Activated CD4-positive, alpha-beta T cell treated with anti-CD3 and anti-CD28 coated beads, Interleukin-2, amount 10 ng/mL, durations not matched to agents 24 days and 14 days (primary cell): ENCODE measurements at regions of chr3 and their contacts with region 1.

Region 1: DNA sequence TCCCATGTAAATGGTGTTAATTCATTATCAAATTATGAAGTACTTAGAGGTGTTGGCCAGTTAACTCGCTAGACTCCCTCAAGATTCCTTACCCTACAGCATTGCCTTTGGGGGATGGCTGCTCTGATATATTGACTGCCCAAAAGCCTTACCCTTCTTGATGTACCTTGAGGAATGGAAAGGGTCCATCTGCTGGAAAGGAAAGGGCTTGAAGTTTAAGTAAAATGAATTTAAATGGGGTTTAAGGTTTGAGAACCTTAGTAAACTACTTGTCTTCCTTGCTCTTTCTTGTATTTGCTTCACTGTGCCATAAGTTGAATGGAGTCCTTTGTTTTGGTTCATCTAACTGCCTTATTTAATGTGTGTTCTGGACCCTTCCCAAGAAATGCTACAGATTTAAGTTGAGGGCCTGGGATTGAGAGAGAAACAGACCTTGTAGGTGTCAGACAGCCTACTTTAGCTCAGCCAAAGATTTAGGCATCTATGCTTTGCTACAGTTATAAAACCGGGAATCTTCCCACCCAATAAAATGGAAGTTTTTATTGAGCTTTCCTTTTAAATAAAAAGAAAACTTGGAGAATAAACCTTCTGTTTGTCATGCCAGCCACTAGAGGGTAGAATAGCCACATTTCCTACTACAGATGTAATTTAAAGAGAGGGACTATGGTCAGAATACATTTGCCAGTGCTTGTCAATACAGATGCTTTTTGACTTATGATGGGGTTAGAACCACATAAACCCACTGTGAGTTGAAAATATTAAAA is 25.3 kb downstream of the CMSS1 start:
- DNase-seq: no peak
- H3K4me3 Mint-ChIP-seq: no peak overlapping the region
- H3K27ac Mint-ChIP-seq: peak overlapping the region; percentile 49
- H3K4me1 Mint-ChIP-seq: peaks cover 18% of the 10 kb centered on the region
- H3K27me3 Mint-ChIP-seq: no peaks in the 10 kb centered on the region

Region 2: DNA sequence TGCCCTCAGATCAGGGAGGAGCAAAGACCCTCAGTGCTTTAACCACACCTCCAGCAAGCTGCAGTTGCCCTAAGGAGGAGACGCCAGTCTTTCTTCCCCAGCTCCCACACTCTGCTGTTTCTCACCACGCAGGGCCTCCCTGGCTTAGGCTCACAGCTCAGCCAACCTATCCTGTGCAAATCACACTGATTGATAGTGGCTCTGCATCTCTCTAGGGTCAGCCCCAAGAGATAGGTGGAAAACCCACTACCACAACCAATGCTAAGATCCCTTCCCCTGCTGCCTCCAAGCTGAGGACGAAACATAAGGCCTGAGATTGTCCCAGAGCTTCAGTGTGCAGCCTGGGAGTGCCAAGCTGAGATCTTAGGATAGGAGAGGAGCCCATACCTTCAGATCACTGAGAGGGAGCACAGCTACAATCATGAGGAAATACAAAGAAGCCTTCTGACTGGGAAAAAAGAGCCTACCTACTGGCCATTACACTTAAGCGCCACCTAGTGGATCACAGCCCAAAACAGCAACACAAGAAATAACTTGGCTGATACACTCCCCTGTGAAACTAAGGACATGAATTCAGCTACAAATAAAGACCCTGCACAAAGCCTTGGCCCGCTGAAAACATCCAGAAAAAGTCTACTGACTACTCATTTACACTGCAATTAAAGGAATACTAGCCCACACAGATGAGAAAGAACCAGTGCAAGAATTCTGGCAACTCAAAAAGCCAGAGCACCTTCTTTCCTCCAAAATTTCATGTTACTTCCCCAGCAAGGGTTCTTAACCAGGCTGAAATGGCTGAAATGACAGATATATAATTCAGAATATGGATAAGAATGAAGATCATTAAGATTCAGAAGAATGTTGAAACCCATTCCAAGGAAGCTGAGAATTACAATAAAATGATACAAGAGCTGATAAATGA is 670.0 kb before region 1 on chr3:
- intact Hi-C with region 1: no loop called
- DNase-seq: peak; percentile 80
- H3K4me3 Mint-ChIP-seq: no peak overlapping the region
- H3K27ac Mint-ChIP-seq: no peak overlapping the region
- H3K4me1 Mint-ChIP-seq: no peaks in the 10 kb centered on the region
- H3K27me3 Mint-ChIP-seq: peaks cover 1% of the 10 kb centered on the region

Region 3: GRCh38 chr3:99884484-99884883 is 41.5 kb after region 1 on chr3:
- intact Hi-C with region 1: no loop called
- DNase-seq: peak; percentile 62
- H3K4me3 Mint-ChIP-seq: peak overlapping the region; percentile 42
- H3K27ac Mint-ChIP-seq: no peak overlapping the region
- H3K4me1 Mint-ChIP-seq: peaks cover 19% of the 10 kb centered on the region
- H3K27me3 Mint-ChIP-seq: no peaks in the 10 kb centered on the region

Region 4: GRCh38 chr3:99925584-99926212 is 82.7 kb after region 1 on chr3:
- intact Hi-C with region 1: no loop called
- DNase-seq: no peak
- H3K4me3 Mint-ChIP-seq: no peak overlapping the region
- H3K27ac Mint-ChIP-seq: no peak overlapping the region
- H3K4me1 Mint-ChIP-seq: peaks cover 7% of the 10 kb centered on the region
- H3K27me3 Mint-ChIP-seq: no peaks in the 10 kb centered on the region

Region 5: GRCh38 chr3:100254168-100254777 is 411.3 kb after region 1 on chr3:
- intact Hi-C with region 1: loop called (anchors 1 kb)
- DNase-seq: peak; percentile 86
- H3K4me3 Mint-ChIP-seq: no peak overlapping the region
- H3K27ac Mint-ChIP-seq: no peak overlapping the region
- H3K4me1 Mint-ChIP-seq: peaks cover 4% of the 10 kb centered on the region
- H3K27me3 Mint-ChIP-seq: no peaks in the 10 kb centered on the region